ENCODE measurements at regions of chr17 and their contacts with region 1.

Region 1: DNA sequence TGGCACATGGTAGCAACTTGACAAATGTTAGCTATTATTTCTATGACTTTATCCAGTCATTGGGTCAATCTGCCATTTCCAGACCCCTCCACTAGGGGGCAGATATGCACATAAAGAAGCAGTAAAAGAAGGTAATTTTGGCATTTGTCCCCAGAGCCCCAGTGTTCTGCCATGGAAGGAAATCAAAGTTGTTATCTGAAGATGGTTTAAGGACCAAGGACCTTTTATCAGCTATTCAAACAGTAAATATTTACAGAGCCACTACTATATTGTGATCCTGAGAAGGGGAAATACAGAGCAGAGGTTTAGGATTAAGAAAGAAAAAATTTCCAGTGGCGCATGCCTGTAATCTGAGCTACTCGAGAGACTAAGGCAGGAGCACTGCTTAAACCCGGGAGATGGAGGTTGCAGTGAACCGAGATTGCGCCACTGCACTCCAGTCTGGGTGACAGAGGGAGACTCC is 20.0 kb downstream of the TRAF4 start:
- DNase-seq: peak; percentile 63 to 85
- ATAC-seq: peak; percentile 48

Region 2: GRCh38 chr17:28896884-28897768 is 133.3 kb after region 1 on chr17 and contains the start of gene FLOT2:
- intact Hi-C with region 1: loop called in 1 of 2 experiments (anchors 10 kb)
- DNase-seq: peak; percentile 62 to 77
- ATAC-seq: peak; percentile 77
- total RNA-seq, gene FLOT2: 82.4 to 91.5 TPM

Region 3: GRCh38 chr17:28925912-28926365 is 162.1 kb after region 1 on chr17:
- intact Hi-C with region 1: loop called in 1 of 2 experiments (anchors 10 kb)
- DNase-seq: no peak
- ATAC-seq: peak; percentile 17

Measured in left colon (tissue), 2 donors.